ENCODE measurements at regions of chr19 and their contacts with region 1.

Region 1: GRCh38 chr19:12983542-12984142 is 11.6 kb upstream of the NFIX start:
- DNase-seq: peak; percentile 87
- H3K4me3 ChIP-seq: peak overlapping the region; percentile 65
- H3K27ac ChIP-seq: no peak overlapping the region
- H3K4me1 ChIP-seq: 0 out of 2 replicates have a peak, but pooled peaks cover 11% of the 10 kb centered on the region
- H3K27me3 ChIP-seq: no peaks in the 10 kb centered on the region

Region 2: GRCh38 chr19:13093407-13094105 is 109.9 kb after region 1 on chr19:
- in situ Hi-C with region 1: loop called (anchors 10 kb)
- DNase-seq: peak; percentile 83
- H3K4me3 ChIP-seq: no peak overlapping the region
- H3K27ac ChIP-seq: peak overlapping the region; percentile 78
- H3K4me1 ChIP-seq: peaks cover 27% of the 10 kb centered on the region
- H3K27me3 ChIP-seq: no peaks in the 10 kb centered on the region